ENCODE measurements at regions of chr2 and their contacts with region 1.

Region 1: GRCh38 chr2:38465789-38466127 is 88.7 kb upstream of the ATL2 start:
- DNase-seq: peak; percentile 34
- H3K4me3 ChIP-seq: no peak overlapping the region
- H3K27ac ChIP-seq: no peak overlapping the region
- H3K4me1 ChIP-seq: peaks cover 41% of the 10 kb centered on the region
- H3K27me3 ChIP-seq: no peaks in the 10 kb centered on the region
- CTCF ChIP-seq: peak; percentile 52 to 83

Region 2: DNA sequence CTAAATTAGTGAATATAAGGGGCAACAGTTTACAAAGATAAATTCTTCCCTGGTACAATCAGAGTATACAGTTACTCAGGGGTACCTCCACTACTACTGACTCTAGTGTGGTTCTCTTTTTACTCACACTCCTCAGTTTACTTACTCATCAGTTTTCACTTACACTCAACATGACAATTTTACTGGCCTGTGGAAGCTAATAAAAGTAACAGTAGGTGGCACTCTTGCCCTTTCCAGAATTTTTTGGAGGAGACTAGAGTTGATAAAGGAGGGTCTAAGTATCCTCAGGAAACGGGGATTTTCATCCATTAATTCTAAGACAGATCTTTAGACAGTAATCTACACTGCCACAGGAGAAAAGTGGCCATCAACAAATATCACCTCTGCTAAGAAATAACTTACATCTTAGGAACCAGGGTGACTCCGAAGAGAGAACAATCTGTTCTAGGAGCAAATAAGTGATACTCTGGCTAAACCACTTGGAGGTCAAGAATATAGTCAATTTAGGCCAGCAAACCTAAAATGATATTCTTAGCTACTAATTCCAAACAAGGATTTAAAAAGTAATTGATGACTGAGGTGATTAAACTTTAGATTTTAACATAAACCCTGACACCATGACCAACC is 149.9 kb before region 1 on chr2:
- CTCF ChIA-PET with region 1: interaction called, 9 read pairs
- dilution Hi-C with region 1: no loop called
- in situ Hi-C with region 1: no loop called
- intact Hi-C with region 1: loop called (anchors 1 kb)
- DNase-seq: peak; percentile 35
- H3K4me3 ChIP-seq: no peak overlapping the region
- H3K27ac ChIP-seq: no peak overlapping the region
- H3K4me1 ChIP-seq: peaks cover 6% of the 10 kb centered on the region
- H3K27me3 ChIP-seq: no peaks in the 10 kb centered on the region
- CTCF ChIP-seq: peak; percentile 68 to 71

Region 3: DNA sequence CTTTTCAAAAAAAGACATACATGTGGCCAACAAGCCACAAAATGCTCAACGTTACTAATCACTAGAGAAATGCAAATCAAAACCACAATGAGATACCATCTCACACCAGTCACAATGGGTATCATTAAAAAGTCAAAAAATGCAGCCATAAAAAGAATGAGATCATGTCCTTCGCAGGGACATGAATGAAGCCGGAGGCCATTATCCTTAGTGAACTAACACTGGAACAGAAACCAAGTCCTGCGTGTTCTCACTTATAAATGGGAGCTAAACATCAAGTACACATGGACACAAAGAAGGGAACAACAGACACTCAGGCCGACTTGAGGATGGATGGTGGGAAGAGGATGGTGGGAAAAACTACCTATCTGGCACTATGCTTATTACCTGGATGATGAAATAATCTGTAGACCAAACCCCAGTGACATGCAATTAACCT is 70.8 kb before region 1 on chr2:
- CTCF ChIA-PET with region 1: no interaction called
- dilution Hi-C with region 1: no loop called
- in situ Hi-C with region 1: no loop called
- intact Hi-C with region 1: loop called (anchors 1 kb)
- DNase-seq: peak; percentile 98
- H3K4me3 ChIP-seq: no peak overlapping the region
- H3K27ac ChIP-seq: peak overlapping the region; percentile 97
- H3K4me1 ChIP-seq: peaks cover 40% of the 10 kb centered on the region
- H3K27me3 ChIP-seq: no peaks in the 10 kb centered on the region
- CTCF ChIP-seq: no peak

Region 4: DNA sequence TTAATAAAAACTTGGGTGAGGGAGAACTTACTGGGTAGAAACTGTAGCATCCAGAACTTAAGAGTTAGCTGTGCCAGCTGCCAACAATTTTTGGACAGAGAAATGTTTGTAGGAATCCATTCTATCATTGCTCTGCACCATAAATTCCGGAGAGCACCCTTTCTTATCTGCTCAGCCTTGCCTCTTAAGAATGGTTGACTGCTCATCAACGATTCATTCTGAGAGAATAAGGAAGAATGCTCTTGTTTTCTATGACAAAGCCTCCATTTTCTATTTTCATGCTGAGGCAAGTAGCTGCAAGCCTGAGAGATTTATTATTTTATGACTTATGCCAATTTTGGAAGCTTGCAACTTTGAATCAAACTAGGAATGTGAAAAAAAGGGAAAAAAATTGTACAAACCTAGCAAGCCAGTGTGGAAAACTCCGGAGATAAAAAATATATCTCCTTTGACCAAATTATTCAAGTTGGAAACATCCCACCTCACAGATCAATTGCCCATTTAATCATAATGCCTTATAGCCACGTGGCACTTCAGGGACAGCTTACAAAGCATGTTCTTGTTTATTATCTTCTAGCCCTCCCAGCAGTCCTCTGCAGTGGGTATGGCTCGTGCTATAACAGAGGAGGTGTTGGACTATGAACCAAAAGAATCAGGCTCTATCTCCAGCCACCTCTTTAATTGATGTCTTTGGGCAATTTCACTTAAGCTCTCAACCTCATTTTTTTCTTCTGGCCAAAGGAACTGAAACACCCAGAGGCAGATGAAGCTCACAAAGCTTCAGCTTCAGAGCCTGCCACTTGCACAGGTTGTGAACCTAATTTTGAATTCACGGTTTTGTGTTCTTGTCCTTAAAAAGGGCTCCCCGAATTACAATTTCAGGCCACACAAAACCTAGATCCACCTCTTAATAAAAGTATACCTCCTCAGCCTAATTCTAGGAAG is 47.7 kb before region 1 on chr2:
- CTCF ChIA-PET with region 1: no interaction called
- dilution Hi-C with region 1: loop called (anchors 5 kb)
- in situ Hi-C with region 1: no loop called
- intact Hi-C with region 1: no loop called
- DNase-seq: peak; percentile 81
- H3K4me3 ChIP-seq: no peak overlapping the region
- H3K27ac ChIP-seq: peak overlapping the region; percentile 39
- H3K4me1 ChIP-seq: peaks cover 38% of the 10 kb centered on the region
- H3K27me3 ChIP-seq: no peaks in the 10 kb centered on the region
- CTCF ChIP-seq: no peak

Region 5: DNA sequence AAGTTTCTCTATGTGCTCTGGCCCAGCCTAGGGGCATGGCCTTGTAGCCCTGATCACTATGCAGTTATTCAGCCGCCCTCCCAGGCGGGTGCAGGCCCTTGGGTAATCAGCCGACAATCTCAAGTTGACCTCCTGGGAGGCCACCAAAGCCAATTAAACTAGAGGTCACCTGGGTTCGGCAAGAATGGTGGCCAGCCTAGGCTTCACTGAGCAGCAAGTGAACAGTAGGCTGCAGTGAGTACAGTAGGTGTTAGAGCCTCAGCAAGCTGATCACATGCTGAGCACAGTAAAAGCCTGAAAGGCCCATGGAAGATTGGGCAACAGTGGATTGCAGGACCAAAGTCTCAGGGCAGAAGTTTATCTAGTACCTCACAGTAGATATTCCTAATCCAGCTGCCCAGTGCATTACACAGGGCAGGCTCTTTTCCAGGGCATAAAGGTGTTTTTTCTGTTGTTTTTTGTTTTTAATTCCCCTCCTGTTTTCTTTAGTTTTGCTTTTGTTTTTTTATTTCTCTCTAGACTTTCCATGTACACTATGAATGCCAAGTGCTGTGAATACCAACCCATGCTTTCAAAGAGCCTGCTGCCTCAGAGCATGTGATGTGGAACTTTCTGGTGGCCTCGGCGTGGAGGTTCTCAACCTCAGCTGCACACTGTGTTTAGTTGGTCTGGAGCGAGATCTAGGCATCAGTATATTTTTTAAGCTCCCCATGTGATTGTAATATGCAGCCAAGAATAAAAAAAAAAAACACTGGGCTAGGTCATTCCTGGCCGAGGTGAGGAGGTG is 32.7 kb before region 1 on chr2:
- CTCF ChIA-PET with region 1: no interaction called
- dilution Hi-C with region 1: no loop called
- in situ Hi-C with region 1: no loop called
- intact Hi-C with region 1: loop called (anchors 2 kb)
- DNase-seq: peak; percentile 35
- H3K4me3 ChIP-seq: no peak overlapping the region
- H3K27ac ChIP-seq: no peak overlapping the region
- H3K4me1 ChIP-seq: peaks cover 42% of the 10 kb centered on the region
- H3K27me3 ChIP-seq: no peaks in the 10 kb centered on the region
- CTCF ChIP-seq: no peak

Region 6: DNA sequence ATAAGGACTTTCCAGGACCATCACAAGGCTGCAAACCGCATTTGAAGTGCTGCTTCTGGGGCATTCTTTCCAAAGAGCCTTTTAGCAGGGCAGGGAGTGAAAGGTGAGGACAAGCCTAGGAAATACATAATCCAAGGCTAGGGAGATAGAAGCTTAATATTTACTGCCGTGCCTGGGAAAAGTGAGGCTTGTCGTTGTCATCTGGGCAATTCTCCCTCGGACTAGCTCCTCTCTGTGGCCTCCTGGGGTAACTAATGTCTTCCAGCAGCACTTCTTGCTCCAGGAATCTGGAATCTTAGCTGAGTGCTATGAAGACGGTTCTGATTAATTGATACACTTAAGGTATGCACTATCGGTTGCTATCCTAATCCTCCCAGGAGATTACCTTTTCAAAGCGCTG is 19.3 kb before region 1 on chr2:
- CTCF ChIA-PET with region 1: interaction called, 5 read pairs
- dilution Hi-C with region 1: no loop called
- in situ Hi-C with region 1: no loop called
- intact Hi-C with region 1: loop called (anchors 2 kb)
- DNase-seq: no peak
- H3K4me3 ChIP-seq: peak overlapping the region in 1 of 3 experiments; percentile 28
- H3K27ac ChIP-seq: peak overlapping the region; percentile 51
- H3K4me1 ChIP-seq: peaks cover 63% of the 10 kb centered on the region
- H3K27me3 ChIP-seq: no peaks in the 10 kb centered on the region
- CTCF ChIP-seq: peak in 1 of 2 donors; percentile 42

Region 7: GRCh38 chr2:38508311-38509039 is 42.7 kb after region 1 on chr2:
- CTCF ChIA-PET with region 1: no interaction called
- dilution Hi-C with region 1: loop called (anchors 5 kb)
- in situ Hi-C with region 1: no loop called
- intact Hi-C with region 1: loop called (anchors 2 kb)
- DNase-seq: peak; percentile 70
- H3K4me3 ChIP-seq: no peak overlapping the region
- H3K27ac ChIP-seq: no peak overlapping the region
- H3K4me1 ChIP-seq: peaks cover 24% of the 10 kb centered on the region
- H3K27me3 ChIP-seq: no peaks in the 10 kb centered on the region
- CTCF ChIP-seq: peak; percentile 68 to 75

Measured in mammary epithelial cell (primary cell).